AG04449 (cell line): ENCODE measurements at regions of chr4 and their contacts with region 1.

Region 1: GRCh38 chr4:140861359-140862176 is 105.4 kb upstream of the TBC1D9 start:
- DNase-seq: peak; percentile 67
- H3K4me3 ChIP-seq: no peak overlapping the region
- CTCF ChIP-seq: peak; percentile 48

Region 2: GRCh38 chr4:140876615-140877364 is 15.2 kb after region 1 on chr4:
- CTCF ChIA-PET with region 1: interaction called, 118 read pairs
- POLR2A ChIA-PET with region 1: no interaction called
- DNase-seq: no peak
- H3K4me3 ChIP-seq: no peak overlapping the region
- CTCF ChIP-seq: no peak

Region 3: GRCh38 chr4:140884431-140885058 is 23.0 kb after region 1 on chr4:
- CTCF ChIA-PET with region 1: interaction called, 118 read pairs
- POLR2A ChIA-PET with region 1: no interaction called
- DNase-seq: no peak
- H3K4me3 ChIP-seq: no peak overlapping the region
- CTCF ChIP-seq: peak; percentile 68